ENCODE measurements at regions of chr5 and their contacts with region 1.

Region 1: GRCh38 chr5:141564216-141564692 is 54.5 kb downstream of the DIAPH1 start:
- DNase-seq: peak; percentile 88
- H3K4me3 ChIP-seq: no peak overlapping the region
- CTCF ChIP-seq: peak; percentile 56

Region 2: GRCh38 chr5:141182248-141182647 is 382.0 kb before region 1 on chr5 and contains the start of gene PCDHB16:
- CTCF ChIA-PET with region 1: interaction called, 11 read pairs
- POLR2A ChIA-PET with region 1: no interaction called
- DNase-seq: no peak
- H3K4me3 ChIP-seq: peak within 1 kb of the TSS; percentile 23; the same call in 1 of the 2 replicates
- CTCF ChIP-seq: no peak

Region 3: DNA sequence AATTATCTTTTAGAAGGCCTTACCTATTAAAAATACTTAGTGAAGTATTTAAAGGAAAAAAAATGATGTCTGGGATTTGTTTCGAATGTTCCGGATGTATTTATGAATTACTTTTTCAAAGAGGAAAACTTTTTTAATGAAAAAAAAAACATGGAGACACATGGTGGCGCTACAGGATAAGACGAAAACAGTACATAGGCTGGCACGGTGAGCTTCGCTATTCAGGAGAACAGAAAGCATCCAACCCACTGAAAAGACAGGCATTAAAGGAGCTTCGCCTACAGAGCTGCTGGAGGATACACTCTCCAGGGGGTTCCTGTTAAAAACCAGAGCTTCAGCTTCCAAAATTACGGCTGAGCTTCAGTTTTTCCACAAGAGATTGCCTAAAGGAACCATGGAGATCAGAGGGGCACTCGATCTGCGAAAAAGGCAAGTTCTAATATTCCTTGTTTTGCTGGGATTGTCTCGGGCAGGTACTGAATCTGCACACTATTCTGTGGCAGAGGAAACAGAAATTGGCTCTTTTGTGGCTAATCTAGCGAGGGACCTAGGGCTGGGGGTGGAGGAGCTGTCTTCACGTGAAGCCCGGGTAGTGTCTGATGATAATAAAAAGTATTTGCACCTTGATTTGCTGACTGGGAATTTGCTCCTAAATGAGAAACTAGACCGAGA is 341.0 kb before region 1 on chr5 and contains the start of gene PCDHB14:
- CTCF ChIA-PET with region 1: interaction called, 57 read pairs
- POLR2A ChIA-PET with region 1: interaction called, 4 read pairs
- DNase-seq: no peak
- H3K4me3 ChIP-seq: peak within 1 kb of the TSS; percentile 33
- CTCF ChIP-seq: no peak

Region 4: DNA sequence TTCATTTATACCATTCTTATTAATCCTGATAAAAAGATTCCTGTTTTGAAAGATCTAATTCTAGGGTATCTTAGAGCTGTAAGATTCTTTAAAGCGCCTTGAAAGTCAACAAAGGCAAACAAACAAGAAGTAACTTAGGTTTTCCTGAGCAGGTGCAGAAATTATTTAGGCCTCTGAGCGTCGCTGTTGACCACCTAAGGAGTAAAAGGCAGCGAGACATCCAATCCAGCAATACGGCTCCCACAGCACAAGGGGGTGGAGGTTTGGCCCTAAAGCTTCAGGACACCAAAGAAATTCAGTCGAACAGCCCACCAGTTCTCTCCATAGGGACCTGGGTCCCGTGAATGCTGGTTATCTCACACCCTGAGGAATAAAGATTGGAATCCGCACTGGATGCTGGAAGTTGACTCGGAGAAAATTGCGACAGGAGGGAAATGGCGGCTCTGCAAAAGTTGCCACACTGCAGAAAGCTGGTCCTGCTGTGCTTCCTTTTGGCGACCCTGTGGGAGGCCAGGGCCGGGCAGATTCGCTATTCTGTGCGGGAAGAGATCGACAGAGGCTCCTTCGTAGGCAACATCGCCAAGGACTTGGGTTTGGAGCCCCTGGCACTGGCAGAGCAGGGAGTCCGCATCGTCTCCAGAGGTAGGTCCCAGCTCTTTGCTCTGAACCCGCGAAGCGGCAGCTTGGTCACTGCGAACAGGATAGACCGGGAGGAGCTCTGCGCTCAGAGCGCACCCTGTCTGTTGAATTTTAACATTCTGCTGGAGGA is 225.5 kb before region 1 on chr5 and contains the start of gene PCDHGA2:
- CTCF ChIA-PET with region 1: interaction called, 209 read pairs
- POLR2A ChIA-PET with region 1: no interaction called
- DNase-seq: no peak
- H3K4me3 ChIP-seq: peak within 1 kb of the TSS; percentile 51
- CTCF ChIP-seq: peak; percentile 53

Region 5: GRCh38 chr5:141387233-141387949 is 176.9 kb before region 1 on chr5 and contains the start of gene PCDHGB4:
- CTCF ChIA-PET with region 1: interaction called, 77 read pairs
- POLR2A ChIA-PET with region 1: no interaction called
- DNase-seq: no peak
- H3K4me3 ChIP-seq: peak within 1 kb of the TSS; percentile 42
- CTCF ChIP-seq: peak; percentile 33

Region 6: GRCh38 chr5:141430332-141431113 is 133.7 kb before region 1 on chr5 and contains the start of gene PCDHGA12:
- CTCF ChIA-PET with region 1: interaction called, 288 read pairs
- POLR2A ChIA-PET with region 1: no interaction called
- DNase-seq: peak; percentile 52
- H3K4me3 ChIP-seq: peak within 1 kb of the TSS; percentile 49
- CTCF ChIP-seq: peak; percentile 38

Region 7: GRCh38 chr5:141598391-141599350 is 34.4 kb after region 1 on chr5:
- CTCF ChIA-PET with region 1: interaction called, 46 read pairs
- POLR2A ChIA-PET with region 1: no interaction called
- DNase-seq: no peak
- H3K4me3 ChIP-seq: no peak overlapping the region
- CTCF ChIP-seq: no peak

Region 8: GRCh38 chr5:141717043-141717442 is 152.8 kb after region 1 on chr5:
- CTCF ChIA-PET with region 1: no interaction called
- POLR2A ChIA-PET with region 1: no interaction called
- DNase-seq: no peak
- H3K4me3 ChIP-seq: no peak overlapping the region
- CTCF ChIP-seq: no peak

Region 9: DNA sequence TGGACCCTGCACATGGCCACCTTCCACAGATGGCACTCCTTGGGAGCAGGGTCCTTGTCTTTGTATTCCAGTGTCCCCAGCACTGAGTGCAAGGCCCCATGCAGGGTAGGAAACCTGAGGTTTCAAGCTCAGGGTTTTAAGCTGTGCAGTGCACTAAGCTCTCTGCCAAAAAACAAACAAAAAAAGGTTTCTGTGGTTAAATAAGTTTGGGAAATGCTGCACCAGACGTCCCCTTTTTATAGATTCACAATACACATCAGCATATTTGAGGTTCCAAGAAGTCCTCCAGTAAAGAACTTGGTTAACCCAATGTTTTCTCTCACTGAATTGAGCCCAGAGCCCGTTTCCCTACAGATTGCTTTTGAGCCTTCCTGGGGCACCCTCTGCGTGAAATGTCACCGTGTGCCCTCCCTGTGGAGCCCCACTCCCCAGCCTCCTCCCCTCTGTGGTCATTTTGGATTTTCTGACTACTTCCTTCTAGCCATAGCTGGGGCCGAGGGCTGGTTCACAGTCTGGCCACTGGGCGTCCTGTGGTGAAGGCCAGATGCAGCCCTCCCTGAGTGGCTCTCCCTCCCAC is 376.5 kb after region 1 on chr5:
- CTCF ChIA-PET with region 1: no interaction called
- POLR2A ChIA-PET with region 1: no interaction called
- DNase-seq: no peak
- H3K4me3 ChIP-seq: no peak overlapping the region
- CTCF ChIP-seq: no peak